HAP-1 (cell line): ENCODE measurements at regions of chr3 and their contacts with region 1.

Region 1: DNA sequence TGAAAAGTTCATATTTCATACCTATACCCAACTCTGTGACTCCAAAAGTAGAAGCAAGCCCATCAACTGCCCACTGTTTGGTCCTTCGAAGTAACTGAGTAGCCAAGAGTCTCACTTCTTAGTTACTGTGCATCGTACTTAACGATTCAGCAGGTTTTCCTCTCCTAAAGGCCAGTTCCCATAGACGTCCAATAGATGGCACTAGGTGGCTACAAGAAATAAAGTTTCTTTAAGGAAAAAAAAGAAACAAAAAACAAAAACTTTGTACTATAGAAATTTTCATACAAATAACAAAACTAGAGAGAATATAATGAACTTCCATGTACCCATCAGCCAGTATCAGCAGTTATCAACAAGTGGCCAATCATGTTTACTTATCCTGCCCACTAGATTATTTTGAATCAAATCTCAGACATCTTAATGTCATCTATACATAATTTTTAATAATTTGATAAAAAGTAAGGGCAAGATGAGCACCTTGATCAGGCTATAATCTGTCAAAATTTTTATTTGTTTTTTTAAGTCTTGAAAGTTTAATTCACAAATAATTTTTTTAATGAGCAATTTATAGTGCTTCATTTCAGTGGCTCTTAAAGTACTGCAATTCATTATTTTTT is 63.8 kb upstream of the ACP3 start:
- DNase-seq: peak; percentile 34 to 44
- H3K4me3 ChIP-seq: no peak overlapping the region
- H3K4me1 ChIP-seq: no peaks in the 10 kb centered on the region
- H3K27me3 ChIP-seq: no peaks in the 10 kb centered on the region

Region 2: GRCh38 chr3:132343018-132343612 is 89.7 kb after region 1 on chr3:
- in situ Hi-C with region 1: loop called (anchors 10 kb)
- DNase-seq: peak; percentile 63 to 64
- H3K4me3 ChIP-seq: no peak overlapping the region
- H3K4me1 ChIP-seq: peaks cover 5% of the 10 kb centered on the region
- H3K27me3 ChIP-seq: peaks cover 5% of the 10 kb centered on the region; the same call in 1 of the 2 replicates

Region 3: GRCh38 chr3:132405188-132405587 is 151.8 kb after region 1 on chr3:
- in situ Hi-C with region 1: loop called (anchors 10 kb)
- DNase-seq: no peak
- H3K4me3 ChIP-seq: no peak overlapping the region
- H3K4me1 ChIP-seq: no peaks in the 10 kb centered on the region
- H3K27me3 ChIP-seq: peaks cover 56% of the 10 kb centered on the region